ENCODE measurements at regions of chr5 and their contacts with region 1.

Region 1: DNA sequence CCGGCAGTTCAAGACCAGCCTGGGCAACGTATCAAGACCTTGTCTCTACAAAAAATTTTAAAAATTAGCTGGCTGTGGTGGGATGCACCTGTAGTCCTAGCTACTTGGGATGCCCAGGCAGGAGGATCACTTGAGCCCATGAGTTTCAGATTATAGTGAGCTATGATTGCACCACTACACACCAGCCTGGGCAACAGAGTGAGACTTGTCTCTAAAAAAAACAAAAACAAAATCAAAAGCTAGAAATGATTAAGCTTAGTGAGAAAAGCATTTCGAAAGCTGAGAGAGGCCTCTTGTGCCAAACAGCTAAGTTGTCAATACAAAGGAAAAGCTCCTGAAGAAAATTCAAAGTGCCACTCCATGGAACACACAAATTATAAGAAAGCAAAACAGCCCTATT is 4.8 kb downstream of the FAM151B start:
- DNase-seq: no peak
- H3K4me3 ChIP-seq: no peak overlapping the region
- H3K27ac ChIP-seq: no peak overlapping the region
- H3K4me1 ChIP-seq: peaks cover 5% of the 10 kb centered on the region; the same call in 1 of the 2 replicates
- H3K27me3 ChIP-seq: no peaks in the 10 kb centered on the region

Region 2: DNA sequence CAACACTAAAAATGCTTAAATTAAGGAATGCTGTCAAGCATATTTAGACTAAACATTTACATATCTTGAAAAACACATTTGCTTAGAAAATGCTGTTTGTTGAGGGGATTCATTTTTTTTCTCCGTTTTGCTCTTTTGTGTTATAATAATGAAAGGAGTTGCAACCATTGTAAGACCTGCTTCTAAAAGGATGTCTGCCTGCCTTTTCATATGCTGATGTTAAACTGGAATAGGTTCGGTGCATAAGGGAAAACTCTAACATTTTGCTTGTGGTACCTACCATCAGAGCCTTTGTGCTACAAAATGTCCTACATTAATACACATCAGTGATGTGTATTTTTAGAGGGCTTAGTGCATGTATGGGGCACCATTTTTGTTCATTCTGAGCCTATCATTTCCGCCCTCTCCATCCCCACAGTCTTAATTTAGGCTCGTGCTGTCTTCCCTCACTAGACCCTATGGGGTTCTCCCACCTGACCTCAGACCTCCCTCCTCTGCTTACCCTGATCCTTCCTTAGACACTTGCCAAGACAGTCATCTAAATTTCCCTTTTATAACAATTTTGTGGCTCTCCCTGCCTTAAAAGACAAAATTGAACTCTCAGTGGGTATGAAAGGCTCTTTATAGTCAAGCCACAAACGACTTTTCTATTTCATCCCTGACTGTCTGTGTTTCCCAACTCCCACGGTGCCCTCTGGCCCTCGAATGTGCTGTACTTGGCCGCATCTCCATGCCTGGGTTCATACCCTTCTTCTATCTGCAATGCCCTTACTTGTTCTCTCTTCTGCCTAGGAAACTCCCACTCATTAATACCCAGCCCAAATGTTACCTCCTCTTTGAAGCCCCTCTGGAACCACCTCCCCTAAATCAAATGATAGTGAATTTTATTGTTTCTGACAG is 741.9 kb before region 1 on chr5:
- in situ Hi-C with region 1: no loop called
- DNase-seq: no peak
- H3K4me3 ChIP-seq: no peak overlapping the region
- H3K27ac ChIP-seq: no peak overlapping the region
- H3K4me1 ChIP-seq: no peaks in the 10 kb centered on the region
- H3K27me3 ChIP-seq: no peaks in the 10 kb centered on the region

Region 3: DNA sequence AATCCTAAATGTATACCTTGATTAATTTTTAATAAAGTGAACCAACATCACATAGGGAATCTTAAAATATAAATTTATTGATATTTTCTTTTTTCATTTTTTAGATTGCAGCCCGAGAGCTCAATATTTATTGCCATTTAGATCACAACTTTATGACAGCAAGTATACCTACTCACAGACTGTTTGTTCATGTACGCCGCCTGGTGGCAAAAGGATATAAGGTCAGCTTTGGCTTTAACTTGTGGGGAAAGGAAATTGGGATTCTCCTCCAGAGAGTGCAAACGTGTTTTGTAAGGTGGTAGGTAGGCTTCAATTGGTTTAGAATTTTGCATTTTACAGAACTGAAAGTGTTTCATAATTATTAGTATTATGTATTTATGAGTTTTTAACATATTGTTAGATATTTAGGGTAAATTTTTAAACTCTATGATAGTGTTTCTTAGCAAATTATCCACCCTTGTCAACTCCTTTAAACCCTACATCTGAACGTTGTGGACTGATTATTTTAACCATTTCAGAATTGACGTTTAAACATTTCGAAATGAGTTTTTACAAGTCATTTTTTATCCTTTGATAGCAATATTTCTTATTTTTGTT is 179.5 kb after region 1 on chr5:
- in situ Hi-C with region 1: loop called (anchors 10 kb)
- DNase-seq: peak; percentile 79
- H3K4me3 ChIP-seq: no peak overlapping the region
- H3K27ac ChIP-seq: no peak overlapping the region
- H3K4me1 ChIP-seq: no peaks in the 10 kb centered on the region
- H3K27me3 ChIP-seq: no peaks in the 10 kb centered on the region